ENCODE measurements at regions of chr2 and their contacts with region 1.

Region 1: DNA sequence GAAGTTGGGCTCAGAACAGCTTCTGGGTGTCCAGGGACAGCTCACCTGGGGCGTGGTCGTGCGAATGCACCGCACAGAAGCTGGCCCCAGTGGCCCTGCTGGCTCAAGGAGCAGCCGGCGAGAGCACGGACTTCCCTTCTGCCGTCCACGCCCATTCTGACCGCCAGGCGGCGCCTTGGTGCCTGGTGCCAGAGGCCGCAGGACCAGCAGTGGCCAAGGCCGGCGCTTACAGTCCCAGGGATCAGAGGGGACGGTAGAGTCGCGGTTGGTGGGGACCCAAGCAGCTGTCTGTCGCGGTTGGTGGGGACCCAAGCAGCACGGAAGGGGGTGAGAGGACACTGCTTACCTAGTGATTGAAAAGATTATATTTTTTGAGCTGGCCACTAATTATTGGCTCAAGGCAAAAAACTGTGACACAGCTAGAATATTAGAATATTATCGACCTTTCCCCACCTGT is 25.7 kb downstream of the NPPC start:
- DNase-seq: peak; percentile 85 to 99
- H3K4me3 ChIP-seq: peak overlapping the region in 1 of 4 experiments; percentile 29; a peak in 1 of 8 replicates
- H3K27ac ChIP-seq: no peak overlapping the region
- H3K4me1 ChIP-seq: peaks cover 0 to 8% (median 2%) of the 10 kb centered on the region in 4 experiments; a peak in 5 of 7 replicates
- H3K27me3 ChIP-seq: no peaks in the 10 kb centered on the region
- CTCF ChIP-seq: peak; percentile 99
- EP300 ChIP-seq: no peak
- POLR2A ChIP-seq: no peak
- RAD21 ChIP-seq: peak; percentile 67 to 84

Region 2: DNA sequence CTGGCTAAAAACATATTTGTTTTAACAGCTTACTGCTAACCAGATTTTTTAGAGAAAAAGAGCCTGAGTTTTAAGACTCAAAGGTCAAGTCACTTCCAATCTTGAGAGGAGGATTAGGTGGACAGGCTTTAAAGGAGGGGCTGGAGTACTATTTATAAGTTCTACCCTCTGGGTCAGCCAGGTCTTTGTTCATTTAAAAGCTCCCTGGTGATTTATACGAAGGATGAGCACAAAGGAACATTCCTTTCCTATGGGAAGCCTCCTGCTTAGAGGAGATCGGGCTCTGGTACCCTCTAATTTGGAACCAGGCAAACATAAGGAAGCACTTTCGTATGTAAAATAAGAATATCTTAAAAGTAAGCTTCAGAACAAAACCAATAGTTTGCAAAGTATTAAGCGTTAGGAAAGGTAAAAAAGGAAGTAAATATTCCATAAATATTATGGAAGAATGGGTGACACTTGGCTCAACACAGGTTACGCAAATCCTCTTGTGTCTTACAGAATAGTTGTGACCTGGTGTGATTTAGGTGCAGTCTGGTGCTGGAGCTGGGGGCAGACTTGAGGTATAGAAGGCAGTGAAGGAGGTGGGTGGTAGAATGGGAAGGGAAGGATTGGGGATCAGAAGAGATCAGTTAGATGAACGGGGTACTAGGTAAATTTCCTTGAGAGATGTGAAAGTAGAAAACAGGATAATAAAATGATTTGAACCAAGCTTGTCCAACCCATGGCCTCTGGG is 155.0 kb before region 1 on chr2:
- CTCF ChIA-PET with region 1: no interaction called
- POLR2A ChIA-PET with region 1: no interaction called
- DNase-seq: peak in 1 of 2 experiments; percentile 3
- H3K4me3 ChIP-seq: peak overlapping the region in 1 of 4 experiments; percentile 31; a peak in 1 of 8 replicates
- H3K27ac ChIP-seq: no peak overlapping the region
- H3K4me1 ChIP-seq: peaks cover 4 to 11% (median 7%) of the 10 kb centered on the region in 4 experiments; a peak in 4 of 7 replicates
- H3K27me3 ChIP-seq: no peaks in the 10 kb centered on the region
- CTCF ChIP-seq: no peak
- EP300 ChIP-seq: no peak
- POLR2A ChIP-seq: no peak
- RAD21 ChIP-seq: no peak

Region 3: DNA sequence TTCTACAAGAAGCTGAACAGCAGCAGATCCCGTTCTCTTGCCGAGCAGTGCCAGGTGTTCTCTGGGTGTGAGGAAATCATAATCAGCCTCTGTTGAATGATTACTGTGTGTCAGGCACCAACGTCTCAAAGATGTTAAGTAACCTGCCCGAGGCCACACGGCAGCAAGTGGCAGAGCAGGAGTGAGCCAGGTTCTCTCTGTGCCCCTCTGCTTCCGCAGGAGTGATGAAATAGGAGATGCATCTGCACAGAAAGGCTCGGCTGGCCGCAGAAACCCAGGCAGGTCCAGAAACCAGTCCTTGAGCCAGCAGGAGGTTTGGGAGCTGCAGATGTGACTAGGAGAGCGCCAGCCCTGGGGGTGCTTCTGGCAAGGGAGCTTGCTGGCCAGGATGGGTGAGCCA is 45.8 kb before region 1 on chr2:
- CTCF ChIA-PET with region 1: interaction called, 58 read pairs
- POLR2A ChIA-PET with region 1: no interaction called
- DNase-seq: no peak
- H3K4me3 ChIP-seq: no peak overlapping the region
- H3K27ac ChIP-seq: no peak overlapping the region
- H3K4me1 ChIP-seq: no peaks in the 10 kb centered on the region
- H3K27me3 ChIP-seq: no peaks in the 10 kb centered on the region
- CTCF ChIP-seq: no peak
- EP300 ChIP-seq: no peak
- POLR2A ChIP-seq: no peak
- RAD21 ChIP-seq: no peak

Region 4: GRCh38 chr2:231925303-231926179 is 25.0 kb after region 1 on chr2:
- CTCF ChIA-PET with region 1: interaction called, 220 read pairs
- POLR2A ChIA-PET with region 1: no interaction called
- DNase-seq: peak; percentile 59 to 93
- H3K4me3 ChIP-seq: peak overlapping the region; percentile 52 to 75 (median 66)
- H3K27ac ChIP-seq: no peak overlapping the region
- H3K4me1 ChIP-seq: peaks cover 3 to 20% (median 14%) of the 10 kb centered on the region in 4 experiments
- H3K27me3 ChIP-seq: peaks cover 24 to 55% (median 43%) of the 10 kb centered on the region in 4 experiments
- CTCF ChIP-seq: peak in 2 of 3 experiments; percentile 80 to 89; a peak in 3 of 4 replicates
- EP300 ChIP-seq: no peak
- POLR2A ChIP-seq: no peak
- RAD21 ChIP-seq: peak; percentile 56 to 73

Region 5: DNA sequence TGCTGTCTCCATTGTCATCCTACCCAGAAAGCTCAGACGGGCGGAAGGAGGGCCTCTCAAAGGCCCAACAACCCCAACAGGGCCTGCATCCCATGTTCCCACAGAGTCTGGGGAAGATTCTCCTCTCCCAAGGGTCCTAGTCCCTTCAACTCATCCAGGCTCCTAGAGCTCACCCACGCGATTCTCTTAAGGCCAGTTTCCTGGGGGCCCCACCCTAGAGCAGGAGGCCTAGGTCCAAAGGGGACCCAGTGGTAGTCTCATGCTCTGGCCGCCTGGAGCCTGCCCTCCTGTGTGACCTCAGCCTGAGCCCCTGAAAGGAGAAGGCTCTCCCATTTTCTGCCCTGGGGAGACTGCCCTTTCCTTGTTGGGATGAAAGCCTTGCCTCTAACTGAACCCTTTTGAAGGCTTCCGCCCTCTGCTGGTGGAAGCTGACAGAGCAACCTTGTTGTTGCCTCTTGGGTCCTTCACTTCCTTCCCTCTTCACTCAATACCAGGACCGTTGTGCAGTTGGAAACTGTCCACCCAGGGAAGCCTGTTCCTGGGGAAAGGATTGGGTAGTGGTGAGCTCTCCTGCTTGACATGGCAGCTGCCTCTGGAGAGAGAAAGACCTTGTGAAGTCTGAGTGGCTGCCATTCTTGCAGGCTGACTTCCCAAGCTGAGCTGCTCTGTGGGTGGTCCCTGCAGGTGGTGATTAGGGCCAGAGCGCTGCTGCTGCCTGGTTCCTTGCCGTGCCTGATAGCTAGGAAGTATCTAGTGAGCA is 392.1 kb after region 1 on chr2:
- CTCF ChIA-PET with region 1: interaction called, 13 read pairs
- POLR2A ChIA-PET with region 1: no interaction called
- DNase-seq: peak; percentile 46 to 89
- H3K4me3 ChIP-seq: no peak overlapping the region
- H3K27ac ChIP-seq: no peak overlapping the region
- H3K4me1 ChIP-seq: peaks cover 2 to 5% (median 3%) of the 10 kb centered on the region in 4 experiments; a peak in 5 of 7 replicates
- H3K27me3 ChIP-seq: no peaks in the 10 kb centered on the region
- CTCF ChIP-seq: peak; percentile 72 to 95 (median 77)
- EP300 ChIP-seq: no peak
- POLR2A ChIP-seq: no peak
- RAD21 ChIP-seq: peak; percentile 59 to 72

Region 6: DNA sequence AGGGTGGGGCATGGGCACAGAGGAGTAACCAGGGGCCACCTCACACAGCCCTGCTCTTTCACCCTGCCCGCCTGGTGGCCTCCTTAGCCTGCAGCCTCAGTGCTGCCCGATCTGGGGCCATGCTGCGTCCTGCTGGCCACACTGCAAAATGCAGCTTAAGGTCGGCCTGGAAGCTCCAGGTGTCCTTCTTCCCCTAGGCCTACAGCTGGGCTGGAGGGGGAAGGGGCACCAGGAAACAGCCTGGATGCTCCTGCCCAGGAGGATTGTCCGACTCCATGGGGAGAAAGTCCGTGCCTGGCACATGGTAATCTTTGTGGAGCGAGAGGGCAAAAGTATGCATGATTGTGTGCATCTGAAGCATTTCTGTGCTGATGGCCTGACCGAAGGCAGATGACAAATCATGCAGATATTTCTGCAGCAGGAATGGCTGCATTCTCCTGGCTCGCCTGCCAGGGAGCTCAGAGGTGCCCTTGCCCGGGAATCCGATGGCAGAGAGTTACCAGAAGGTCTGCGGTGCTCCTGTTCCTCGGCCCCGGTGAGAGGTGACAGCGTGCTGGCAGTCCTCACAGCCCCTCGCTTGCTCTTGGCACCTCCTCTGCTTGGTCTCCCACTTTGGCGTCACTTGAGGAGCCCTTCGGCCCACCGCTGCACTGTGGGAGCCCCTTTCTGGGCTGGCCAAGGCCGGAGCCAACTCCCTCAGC is 465.3 kb after region 1 on chr2:
- CTCF ChIA-PET with region 1: interaction called, 15 read pairs
- POLR2A ChIA-PET with region 1: no interaction called
- DNase-seq: no peak
- H3K4me3 ChIP-seq: no peak overlapping the region
- H3K27ac ChIP-seq: no peak overlapping the region
- H3K4me1 ChIP-seq: peaks cover 0 to 24% (median 6%) of the 10 kb centered on the region in 4 experiments; a peak in 6 of 7 replicates
- H3K27me3 ChIP-seq: no peaks in the 10 kb centered on the region
- CTCF ChIP-seq: peak; percentile 72 to 81 (median 73)
- EP300 ChIP-seq: no peak
- POLR2A ChIP-seq: no peak
- RAD21 ChIP-seq: peak; percentile 51 to 66

Measured in H1 (cell line).